Left ventricle myocardium inferior (tissue), 1 donor: ENCODE measurements at regions of chr3 and their contacts with region 1.

Region 1: DNA sequence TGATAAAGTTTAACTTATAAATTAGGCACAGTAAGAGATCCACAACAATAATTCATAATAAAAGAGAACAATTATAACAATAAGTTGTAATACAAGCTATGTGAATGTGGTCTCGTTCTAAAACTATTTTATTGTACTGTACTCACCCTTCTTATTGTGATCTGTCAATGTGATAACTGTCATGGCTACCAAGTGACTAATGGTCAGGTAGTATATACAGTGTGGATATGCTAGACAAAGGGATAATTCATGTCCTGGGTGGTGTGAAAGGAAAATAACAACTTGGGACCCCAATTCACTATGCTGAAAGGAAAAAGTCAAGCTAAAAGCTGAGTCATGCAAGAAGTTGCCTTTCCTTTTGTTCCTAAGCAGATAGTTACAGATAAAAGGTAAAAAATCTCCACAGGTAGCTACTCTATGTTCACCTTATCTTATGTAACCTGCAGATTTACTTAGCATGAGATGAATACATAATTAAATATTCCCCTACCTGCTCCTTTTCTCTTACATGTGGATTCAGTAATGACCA is 10.7 kb upstream of the CYP8B1 start:
- DNase-seq: no peak
- H3K4me3 ChIP-seq: no peak overlapping the region
- H3K27ac ChIP-seq: no peak overlapping the region
- H3K4me1 ChIP-seq: peaks cover 3% of the 10 kb centered on the region
- H3K27me3 ChIP-seq: peaks cover 27% of the 10 kb centered on the region
- CTCF ChIP-seq: no peak

Region 2: GRCh38 chr3:42654331-42655201 is 231.8 kb before region 1 on chr3:
- intact Hi-C with region 1: no loop called
- DNase-seq: peak; percentile 61
- H3K4me3 ChIP-seq: peak overlapping the region; percentile 81
- H3K27ac ChIP-seq: peak overlapping the region; percentile 96
- H3K4me1 ChIP-seq: peaks cover 76% of the 10 kb centered on the region
- H3K27me3 ChIP-seq: no peaks in the 10 kb centered on the region
- CTCF ChIP-seq: no peak

Region 3: DNA sequence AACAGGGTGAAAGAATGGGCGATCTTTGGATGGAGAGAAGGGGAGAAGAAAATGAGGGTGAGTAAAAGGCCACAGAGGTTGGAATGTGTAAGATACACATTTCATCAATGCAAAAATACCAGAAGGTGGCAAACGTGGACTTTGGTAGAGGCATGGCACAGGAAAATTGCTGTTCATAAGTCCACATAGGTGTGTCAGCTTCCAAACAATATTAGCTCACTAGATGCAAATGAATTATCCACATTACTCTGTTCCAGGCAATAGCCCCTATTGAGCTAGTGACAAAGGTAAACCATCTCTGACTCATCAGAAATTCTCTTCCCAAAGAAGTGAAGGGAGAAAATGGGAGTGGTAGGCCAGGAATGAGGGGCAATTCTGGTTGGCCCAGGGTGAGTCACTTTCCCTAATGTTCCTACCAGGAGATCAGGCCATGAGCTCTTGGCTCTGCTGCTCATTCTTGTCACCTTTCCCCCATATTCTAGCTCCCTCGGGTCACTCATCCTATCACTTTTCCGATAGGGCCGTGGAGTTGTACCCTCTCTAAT is 57.2 kb before region 1 on chr3:
- intact Hi-C with region 1: loop called (anchors 5 kb)
- DNase-seq: no peak
- H3K4me3 ChIP-seq: no peak overlapping the region
- H3K27ac ChIP-seq: no peak overlapping the region
- H3K4me1 ChIP-seq: no peaks in the 10 kb centered on the region
- H3K27me3 ChIP-seq: no peaks in the 10 kb centered on the region
- CTCF ChIP-seq: no peak